Left ventricle myocardium inferior (tissue), 1 donor: ENCODE measurements at regions of chr4 and their contacts with region 1.

Region 1: DNA sequence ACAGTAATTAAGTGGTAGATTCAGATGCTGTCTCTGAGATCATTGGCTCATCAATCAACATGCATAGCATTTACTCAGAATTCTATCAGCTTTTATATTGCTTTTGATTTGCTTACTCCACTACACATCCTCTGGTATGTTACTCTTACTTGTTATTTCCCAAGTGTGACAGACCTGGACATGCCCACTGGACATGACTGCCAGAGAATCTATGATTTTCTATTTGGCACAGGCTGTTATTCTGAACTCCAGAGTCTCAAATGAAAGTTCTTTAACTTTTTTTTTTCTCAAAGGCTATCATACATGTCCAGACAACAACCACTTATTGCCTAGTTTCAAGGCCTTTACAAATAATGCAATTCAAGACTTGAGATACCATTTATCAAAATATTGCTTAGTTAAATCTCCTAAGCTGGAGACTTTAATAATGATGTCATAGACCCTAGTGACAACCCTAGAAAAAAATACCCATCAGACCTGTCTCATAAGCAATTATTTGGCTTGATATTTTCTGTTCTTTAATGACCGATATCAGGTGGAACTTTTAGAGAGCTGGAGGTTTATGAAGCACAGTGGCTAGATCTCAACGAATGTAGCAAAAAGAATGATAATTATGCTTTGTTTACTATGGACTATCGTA is 116.0 kb upstream of the ARHGAP24 start:
- DNase-seq: no peak
- H3K4me3 ChIP-seq: no peak overlapping the region
- H3K27ac ChIP-seq: no peak overlapping the region
- H3K4me1 ChIP-seq: no peaks in the 10 kb centered on the region
- H3K27me3 ChIP-seq: no peaks in the 10 kb centered on the region
- CTCF ChIP-seq: no peak

Region 2: DNA sequence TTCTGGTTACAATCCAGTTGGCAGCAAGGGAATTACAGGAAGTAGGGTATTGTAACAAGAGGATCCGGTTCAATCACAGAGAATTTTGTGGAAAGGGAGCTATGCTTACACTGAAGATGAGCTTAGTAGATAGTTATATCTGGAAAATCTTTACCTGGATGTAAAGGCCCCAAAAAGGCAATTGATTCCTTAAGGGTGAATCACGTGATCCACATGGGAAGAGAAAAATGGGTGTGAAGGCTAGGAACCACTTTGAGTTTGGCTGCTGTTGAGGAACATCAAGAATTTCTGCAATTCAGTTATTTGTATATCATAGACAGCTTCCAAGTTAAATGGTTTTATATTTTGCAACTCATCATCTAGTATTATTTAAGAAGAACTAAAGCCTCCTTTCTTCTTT is 78.0 kb before region 1 on chr4:
- intact Hi-C with region 1: loop called (anchors 2 kb)
- DNase-seq: no peak
- H3K4me3 ChIP-seq: no peak overlapping the region
- H3K27ac ChIP-seq: no peak overlapping the region
- H3K4me1 ChIP-seq: peaks cover 4% of the 10 kb centered on the region
- H3K27me3 ChIP-seq: no peaks in the 10 kb centered on the region
- CTCF ChIP-seq: no peak